ENCODE measurements at regions of chr2 and their contacts with region 1.

Region 1: GRCh38 chr2:22784566-22784965 is 600.4 kb upstream of the KLHL29 start:
- DNase-seq: no peak
- H3K4me3 ChIP-seq: no peak overlapping the region
- H3K27ac ChIP-seq: no peak overlapping the region
- H3K4me1 ChIP-seq: no peaks in the 10 kb centered on the region
- H3K27me3 ChIP-seq: no peaks in the 10 kb centered on the region
- CTCF ChIP-seq: no peak

Region 2: DNA sequence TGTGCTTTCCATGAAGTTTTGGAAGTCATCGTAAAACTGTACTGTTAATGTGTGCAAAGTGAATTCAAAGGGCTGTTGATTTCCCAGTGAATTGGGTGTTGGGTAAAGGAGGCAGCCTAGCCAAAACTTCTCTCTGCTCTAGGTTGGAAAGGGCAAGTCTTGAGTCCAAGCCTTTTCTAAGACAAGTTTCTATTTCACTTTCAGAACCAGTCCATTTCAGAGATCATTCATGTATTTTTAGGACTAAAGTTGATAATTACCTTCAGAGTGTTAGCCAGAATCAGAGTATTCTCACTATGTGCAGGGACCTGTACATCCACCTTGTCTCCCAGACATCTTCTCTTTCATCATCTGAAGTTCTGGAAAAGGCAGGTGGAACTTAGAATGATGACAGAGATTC is 35.7 kb before region 1 on chr2:
- CTCF ChIA-PET with region 1: no interaction called
- dilution Hi-C with region 1: loop called (anchors 5 kb)
- in situ Hi-C with region 1: no loop called
- intact Hi-C with region 1: no loop called
- DNase-seq: no peak
- H3K4me3 ChIP-seq: no peak overlapping the region
- H3K27ac ChIP-seq: no peak overlapping the region
- H3K4me1 ChIP-seq: no peaks in the 10 kb centered on the region
- H3K27me3 ChIP-seq: no peaks in the 10 kb centered on the region
- CTCF ChIP-seq: no peak

Region 3: DNA sequence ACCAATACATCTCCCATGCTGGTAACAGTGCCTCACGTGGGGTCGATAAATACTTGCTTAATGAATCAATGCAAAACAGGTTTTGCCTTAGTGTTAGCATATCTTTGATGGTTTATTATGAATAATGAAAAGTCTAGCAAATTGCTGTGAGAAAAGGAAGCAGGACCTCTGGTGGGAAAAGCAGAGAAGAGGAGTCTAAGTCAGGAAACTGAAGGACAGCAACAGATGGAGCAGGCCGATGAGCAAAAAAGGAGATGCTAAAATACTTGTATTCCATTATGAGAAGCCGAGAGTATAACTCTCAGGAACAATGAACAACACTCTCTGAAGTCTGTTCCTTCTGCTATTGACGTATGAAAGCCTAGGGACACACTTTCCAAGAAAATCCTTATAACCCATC is 45.2 kb after region 1 on chr2:
- CTCF ChIA-PET with region 1: no interaction called
- dilution Hi-C with region 1: no loop called
- in situ Hi-C with region 1: no loop called
- intact Hi-C with region 1: no loop called
- DNase-seq: no peak
- H3K4me3 ChIP-seq: no peak overlapping the region
- H3K27ac ChIP-seq: no peak overlapping the region
- H3K4me1 ChIP-seq: no peaks in the 10 kb centered on the region
- H3K27me3 ChIP-seq: no peaks in the 10 kb centered on the region
- CTCF ChIP-seq: no peak

Measured in mammary epithelial cell (primary cell).